ENCODE measurements at regions of chr6 and their contacts with region 1.

Region 1: DNA sequence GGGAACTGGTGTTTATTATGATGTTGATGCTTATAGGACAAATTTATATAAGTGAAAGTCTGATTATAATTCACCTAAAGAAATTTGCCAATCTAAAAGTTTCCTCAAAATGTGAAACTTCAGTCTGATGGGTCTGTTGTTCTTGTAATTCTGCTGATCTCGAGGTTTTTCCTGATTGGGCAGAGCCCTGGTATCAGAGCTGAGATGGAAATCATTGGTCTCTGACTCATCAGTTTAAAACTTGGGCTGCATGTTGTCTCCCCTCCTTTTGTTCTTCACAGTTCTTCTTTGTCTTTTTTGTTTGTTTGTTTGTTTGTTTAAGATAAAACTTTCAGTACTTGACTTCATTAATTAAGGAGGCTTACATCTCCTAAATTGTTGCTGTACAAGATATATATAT is 5.9 kb downstream of the SMAP1 start:
- DNase-seq: no peak
- H3K4me3 ChIP-seq: no peak overlapping the region
- H3K27ac ChIP-seq: no peak overlapping the region
- H3K4me1 ChIP-seq: peaks cover 9% of the 10 kb centered on the region
- H3K27me3 ChIP-seq: no peaks in the 10 kb centered on the region
- CTCF ChIP-seq: no peak

Region 2: DNA sequence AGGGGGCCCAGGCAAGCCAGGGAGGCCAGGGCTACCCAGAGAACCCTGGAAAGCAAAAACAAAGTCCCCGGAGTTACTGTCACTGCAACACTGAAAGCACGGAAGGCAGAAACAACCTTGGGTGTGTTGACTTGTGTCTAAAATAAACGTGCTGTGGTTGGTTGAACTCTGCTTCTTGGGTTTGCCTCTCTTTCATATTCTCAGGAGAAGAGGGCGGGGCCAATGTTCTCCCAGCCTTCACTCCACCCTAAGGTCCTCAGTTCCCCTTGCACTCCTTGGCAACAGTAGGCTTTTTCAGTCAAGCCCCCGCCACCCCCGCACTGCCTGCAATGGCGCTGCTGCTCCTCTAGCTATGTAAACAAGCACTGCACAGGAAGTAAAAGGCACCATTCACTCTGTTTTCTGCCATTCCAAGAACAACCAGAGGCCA is 431.6 kb before region 1 on chr6:
- intact Hi-C with region 1: no loop called
- DNase-seq: peak; percentile 77
- H3K4me3 ChIP-seq: no peak overlapping the region
- H3K27ac ChIP-seq: peak overlapping the region; percentile 73
- H3K4me1 ChIP-seq: no peaks in the 10 kb centered on the region
- H3K27me3 ChIP-seq: no peaks in the 10 kb centered on the region
- CTCF ChIP-seq: no peak

Region 3: DNA sequence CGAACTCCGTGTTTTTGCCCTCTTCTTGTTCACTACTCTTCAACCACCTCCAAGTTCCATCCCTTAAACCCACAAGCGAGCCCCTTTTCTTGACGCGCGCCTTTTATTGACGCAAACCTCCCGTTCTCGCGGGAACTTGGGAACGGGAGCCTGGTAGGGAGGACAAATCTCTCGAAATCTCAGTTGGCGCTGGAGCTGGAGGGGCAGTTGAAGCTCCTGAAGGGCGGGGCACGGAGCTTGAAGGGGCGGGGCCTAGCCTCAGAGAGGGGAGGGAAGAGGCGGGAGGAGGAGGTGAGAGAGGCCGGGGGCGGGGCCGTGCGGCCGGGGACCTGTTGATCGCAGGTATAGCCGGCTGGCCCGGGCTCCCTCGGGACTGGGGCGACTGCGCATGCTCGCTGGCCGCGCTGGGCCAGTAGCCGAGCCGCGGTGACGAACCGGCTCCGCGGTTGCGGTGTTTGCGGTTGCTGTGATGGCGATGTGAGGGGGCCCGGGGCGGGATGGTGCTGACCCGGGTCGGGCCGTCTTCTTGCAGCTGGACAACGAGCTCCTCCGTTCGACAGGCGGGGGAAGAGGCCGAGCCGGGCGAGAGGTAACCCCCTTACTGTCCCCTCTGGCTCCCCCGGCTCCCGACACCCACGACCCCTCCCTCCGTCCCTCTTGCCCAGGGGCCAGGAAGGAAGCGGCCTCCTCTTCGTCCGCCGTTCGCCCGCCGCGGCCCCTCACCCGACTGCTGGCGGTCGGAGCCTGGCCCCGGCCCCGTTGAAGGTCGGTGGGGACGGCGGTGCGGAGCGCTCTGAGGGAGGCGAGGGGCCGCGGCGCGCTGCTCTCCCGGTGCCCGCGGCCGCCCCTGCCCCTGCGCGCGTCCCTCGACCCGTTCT is 260.2 kb before region 1 on chr6 and contains the start of gene FAM135A:
- intact Hi-C with region 1: loop called (anchors 10 kb)
- DNase-seq: peak; percentile 99
- H3K4me3 ChIP-seq: peak within 1 kb of the TSS; percentile 87
- H3K27ac ChIP-seq: peak within 1 kb of the TSS; percentile 87
- H3K4me1 ChIP-seq: peaks cover 3% of the 10 kb centered on the region
- H3K27me3 ChIP-seq: no peaks in the 10 kb centered on the region
- CTCF ChIP-seq: no peak
- total RNA-seq, gene FAM135A: 36.4 to 54.8 TPM

Region 4: GRCh38 chr6:70456735-70457134 is 216.9 kb before region 1 on chr6:
- intact Hi-C with region 1: no loop called
- DNase-seq: peak; percentile 24
- H3K4me3 ChIP-seq: no peak overlapping the region
- H3K27ac ChIP-seq: peak overlapping the region; percentile 15
- H3K4me1 ChIP-seq: no peaks in the 10 kb centered on the region
- H3K27me3 ChIP-seq: no peaks in the 10 kb centered on the region
- CTCF ChIP-seq: no peak